ENCODE measurements at regions of chr5 and their contacts with region 1.

Region 1: DNA sequence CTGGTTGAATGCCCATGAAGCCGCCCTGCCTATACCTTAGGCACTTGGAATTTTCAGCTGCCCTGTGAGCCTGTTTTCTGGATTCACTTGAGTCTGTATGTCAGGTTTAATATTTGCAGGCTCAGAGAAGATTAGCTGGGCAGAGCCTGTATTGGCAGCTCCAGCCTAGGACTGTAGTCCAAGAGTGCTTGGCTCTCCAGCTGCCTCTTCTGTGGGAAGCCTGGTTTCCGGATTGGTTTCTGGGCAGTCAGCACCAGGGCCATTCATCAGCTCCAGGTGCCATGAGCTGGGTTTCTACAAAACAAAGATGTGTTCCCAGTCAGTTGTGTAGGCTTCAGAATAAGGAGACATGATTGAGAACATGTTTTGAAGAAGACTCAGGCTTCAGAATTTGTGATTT is 90.1 kb downstream of the ARHGAP26 start:
- DNase-seq: no peak
- H3K4me3 ChIP-seq: no peak overlapping the region
- H3K4me3 Mint-ChIP-seq: no peak overlapping the region
- H3K27ac ChIP-seq: no peak overlapping the region
- H3K27ac Mint-ChIP-seq: peak overlapping the region in 2 of 8 donors; percentile 1 to 66
- H3K4me1 ChIP-seq: peaks cover 11% of the 10 kb centered on the region
- H3K4me1 Mint-ChIP-seq: peaks cover 83 to 92% (median 87%) of the 10 kb centered on the region in 3 donors
- H3K27me3 ChIP-seq: no peaks in the 10 kb centered on the region
- H3K27me3 Mint-ChIP-seq: no peaks in the 10 kb centered on the region

Region 2: DNA sequence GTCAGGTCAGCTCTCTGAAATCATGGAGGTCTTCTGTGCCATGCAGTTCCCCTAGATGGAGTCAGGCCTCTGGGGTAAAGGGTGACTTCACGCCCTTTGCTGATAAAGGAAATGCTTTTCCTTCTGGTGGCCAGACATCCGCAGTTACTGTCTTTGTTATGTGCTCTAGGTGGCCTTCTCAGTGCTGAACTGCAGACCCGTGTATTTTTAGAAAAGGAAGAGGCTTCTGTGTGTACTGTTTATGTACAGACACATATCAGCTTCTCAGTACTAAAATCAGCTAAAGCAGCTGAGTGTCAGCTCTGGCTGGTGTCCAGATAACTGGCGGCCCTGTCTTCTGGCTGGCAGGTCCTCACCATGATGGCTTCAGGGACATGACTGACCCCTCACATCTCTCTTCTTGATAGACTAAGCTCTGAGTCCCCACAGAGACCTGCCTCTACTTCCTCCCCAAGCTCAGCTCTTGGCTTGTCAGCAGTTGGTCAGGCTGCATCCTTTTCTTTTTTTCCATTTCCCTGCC is 14.8 kb before region 1 on chr5:
- CTCF ChIA-PET with region 1: interaction called, 11 read pairs
- POLR2A ChIA-PET with region 1: no interaction called
- DNase-seq: peak in 2 of 5 donors; percentile 12 to 38
- H3K4me3 ChIP-seq: no peak overlapping the region
- H3K4me3 Mint-ChIP-seq: peak overlapping the region in 6 of 7 donors; percentile 47 to 79 (median 59)
- H3K27ac ChIP-seq: no peak overlapping the region
- H3K27ac Mint-ChIP-seq: peak overlapping the region; percentile 72 to 97 (median 90)
- H3K4me1 ChIP-seq: peaks cover 36% of the 10 kb centered on the region
- H3K4me1 Mint-ChIP-seq: peaks cover 85 to 97% (median 93%) of the 10 kb centered on the region in 3 donors
- H3K27me3 ChIP-seq: no peaks in the 10 kb centered on the region
- H3K27me3 Mint-ChIP-seq: no peaks in the 10 kb centered on the region

Region 3: GRCh38 chr5:142881076-142881783 is 21.0 kb after region 1 on chr5:
- CTCF ChIA-PET with region 1: interaction called, 15 read pairs
- POLR2A ChIA-PET with region 1: no interaction called
- DNase-seq: no peak
- H3K4me3 ChIP-seq: no peak overlapping the region
- H3K4me3 Mint-ChIP-seq: no peak overlapping the region
- H3K27ac ChIP-seq: no peak overlapping the region
- H3K27ac Mint-ChIP-seq: peak overlapping the region in 1 of 8 donors; percentile 70
- H3K4me1 ChIP-seq: no peaks in the 10 kb centered on the region
- H3K4me1 Mint-ChIP-seq: peaks cover 19 to 25% (median 20%) of the 10 kb centered on the region in 3 donors
- H3K27me3 ChIP-seq: no peaks in the 10 kb centered on the region
- H3K27me3 Mint-ChIP-seq: no peaks in the 10 kb centered on the region

Measured in CD8-positive, alpha-beta memory T cell (primary cell).